ENCODE measurements at regions of chr14 and their contacts with region 1.

Region 1: GRCh38 chr14:30214461-30215090 is 286.9 kb upstream of the PRKD1 start:
- DNase-seq: peak; percentile 85
- ATAC-seq: peak; percentile 77
- H3K4me3 ChIP-seq: no peak overlapping the region
- H3K27ac ChIP-seq: no peak overlapping the region
- H3K4me1 ChIP-seq: peaks cover 13% of the 10 kb centered on the region
- H3K27me3 ChIP-seq: no peaks in the 10 kb centered on the region
- CTCF ChIP-seq: peak; percentile 88
- POLR2A ChIP-seq: peak; percentile 35; the same call in 1 of the 2 replicates
- RAD21 ChIP-seq: peak; percentile 93

Region 2: GRCh38 chr14:29016050-29016900 is 1198.3 kb before region 1 on chr14:
- CTCF ChIA-PET with region 1: no interaction called
- POLR2A ChIA-PET with region 1: no interaction called
- dilution Hi-C with region 1: no loop called
- in situ Hi-C with region 1: loop called (anchors 25 kb)
- intact Hi-C with region 1: loop called (anchors 5 kb)
- DNase-seq: peak; percentile 51
- ATAC-seq: peak; percentile 67
- H3K4me3 ChIP-seq: no peak overlapping the region
- H3K27ac ChIP-seq: no peak overlapping the region
- H3K4me1 ChIP-seq: no peaks in the 10 kb centered on the region
- H3K27me3 ChIP-seq: no peaks in the 10 kb centered on the region; the same call in 1 of the 2 replicates
- CTCF ChIP-seq: peak; percentile 74
- POLR2A ChIP-seq: no peak
- RAD21 ChIP-seq: peak; percentile 74

Region 3: GRCh38 chr14:29710015-29710565 is 504.5 kb before region 1 on chr14:
- CTCF ChIA-PET with region 1: no interaction called
- POLR2A ChIA-PET with region 1: no interaction called
- dilution Hi-C with region 1: no loop called
- in situ Hi-C with region 1: loop called (anchors 25 kb)
- intact Hi-C with region 1: loop called (anchors 10 kb)
- DNase-seq: peak; percentile 7
- ATAC-seq: no peak
- H3K4me3 ChIP-seq: no peak overlapping the region
- H3K27ac ChIP-seq: no peak overlapping the region
- H3K4me1 ChIP-seq: no peaks in the 10 kb centered on the region
- H3K27me3 ChIP-seq: no peaks in the 10 kb centered on the region
- CTCF ChIP-seq: peak; percentile 33; the same call in 1 of the 2 replicates
- POLR2A ChIP-seq: no peak
- RAD21 ChIP-seq: peak; percentile 32; the same call in 1 of the 2 replicates

Region 4: GRCh38 chr14:29927376-29928116 is 287.0 kb before region 1 on chr14 and contains the start of gene PRKD1:
- CTCF ChIA-PET with region 1: interaction called, 3 read pairs
- POLR2A ChIA-PET with region 1: no interaction called
- dilution Hi-C with region 1: no loop called
- in situ Hi-C with region 1: loop called (anchors 25 kb)
- intact Hi-C with region 1: loop called (anchors 2 kb)
- DNase-seq: peak; percentile 62
- ATAC-seq: peak; percentile 77
- H3K4me3 ChIP-seq: peak within 1 kb of the TSS; percentile 75
- H3K27ac ChIP-seq: peak within 1 kb of the TSS; percentile 63
- H3K4me1 ChIP-seq: peaks cover 5% of the 10 kb centered on the region
- H3K27me3 ChIP-seq: no peaks in the 10 kb centered on the region
- CTCF ChIP-seq: 0 out of 2 replicates have a peak, but pooled peaks have one; percentile 7
- POLR2A ChIP-seq: no peak
- RAD21 ChIP-seq: no peak
- total RNA-seq, gene PRKD1: 12.8 and 12.9 TPM in 2 replicates

Region 5: GRCh38 chr14:30270200-30271161 is 55.9 kb after region 1 on chr14:
- CTCF ChIA-PET with region 1: interaction called, 16 read pairs
- POLR2A ChIA-PET with region 1: no interaction called
- dilution Hi-C with region 1: no loop called
- in situ Hi-C with region 1: no loop called
- intact Hi-C with region 1: no loop called
- DNase-seq: peak; percentile 81
- ATAC-seq: peak; percentile 99
- H3K4me3 ChIP-seq: peak overlapping the region; percentile 41
- H3K27ac ChIP-seq: no peak overlapping the region
- H3K4me1 ChIP-seq: peaks cover 3% of the 10 kb centered on the region; the same call in 1 of the 2 replicates
- H3K27me3 ChIP-seq: no peaks in the 10 kb centered on the region
- CTCF ChIP-seq: peak; percentile 81
- POLR2A ChIP-seq: no peak
- RAD21 ChIP-seq: peak; percentile 66

Measured in IMR-90 (cell line).